AG04450 (cell line): ENCODE measurements at regions of chr1 and their contacts with region 1.

Region 1: GRCh38 chr1:23403735-23404486 is 20.6 kb downstream of the TCEA3 start:
- DNase-seq: peak; percentile 65
- H3K4me3 ChIP-seq: no peak overlapping the region
- H3K27ac ChIP-seq: peak overlapping the region; percentile 78
- H3K27me3 ChIP-seq: no peaks in the 10 kb centered on the region
- CTCF ChIP-seq: peak; percentile 96

Region 2: DNA sequence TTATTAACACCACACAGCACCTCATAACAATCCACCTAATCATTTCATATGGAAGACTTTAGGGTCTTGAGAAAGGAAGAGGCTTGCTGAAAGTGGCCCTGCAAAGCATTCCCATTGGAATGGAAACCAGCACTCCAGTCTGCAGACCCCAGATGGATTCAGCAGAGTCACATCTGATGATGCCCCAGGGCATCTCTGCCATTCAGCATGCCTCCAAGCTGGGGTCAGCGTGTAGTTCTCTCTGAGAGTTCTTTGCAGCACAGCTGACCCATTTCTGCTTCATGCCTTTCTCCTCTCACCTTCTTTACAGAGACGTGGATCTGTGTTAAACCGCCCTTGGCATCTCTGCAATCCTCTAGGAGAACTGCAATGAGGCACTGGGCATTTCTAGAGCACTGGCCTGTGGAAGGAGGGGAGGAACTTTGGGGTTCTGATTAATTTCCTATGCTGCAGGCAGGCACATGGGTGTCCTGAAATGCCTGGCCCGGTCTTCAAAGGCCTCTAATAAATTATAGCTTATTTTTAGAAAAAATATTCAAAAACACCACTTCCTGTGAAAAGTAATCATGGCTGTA is 232.6 kb before region 1 on chr1:
- CTCF ChIA-PET with region 1: no interaction called
- POLR2A ChIA-PET with region 1: no interaction called
- DNase-seq: no peak
- H3K4me3 ChIP-seq: no peak overlapping the region
- H3K27ac ChIP-seq: no peak overlapping the region
- H3K27me3 ChIP-seq: no peaks in the 10 kb centered on the region
- CTCF ChIP-seq: no peak

Region 3: DNA sequence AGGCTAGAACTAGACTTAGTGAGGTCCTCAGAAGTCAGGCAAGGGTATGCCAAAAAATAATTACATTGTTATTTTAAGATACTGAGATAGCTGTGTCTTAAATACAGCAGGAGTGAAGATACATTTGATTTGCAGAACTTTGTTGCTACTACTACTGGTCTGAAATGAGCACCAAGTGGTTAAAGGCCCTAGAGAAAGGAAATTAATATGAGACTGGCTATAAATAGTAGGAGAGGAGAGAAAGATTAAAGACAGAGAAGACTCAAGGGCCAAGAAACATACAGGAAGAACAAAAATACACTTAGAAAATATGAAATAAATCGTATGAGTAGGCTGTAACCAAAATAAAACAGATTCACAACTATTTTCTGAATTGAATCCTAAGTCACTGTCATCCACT is 81.1 kb before region 1 on chr1:
- CTCF ChIA-PET with region 1: interaction called, 11 read pairs
- POLR2A ChIA-PET with region 1: no interaction called
- DNase-seq: no peak
- H3K4me3 ChIP-seq: no peak overlapping the region
- H3K27ac ChIP-seq: no peak overlapping the region
- H3K27me3 ChIP-seq: no peaks in the 10 kb centered on the region
- CTCF ChIP-seq: no peak

Region 4: GRCh38 chr1:23367791-23368561 is 35.9 kb before region 1 on chr1:
- CTCF ChIA-PET with region 1: interaction called, 24 read pairs
- POLR2A ChIA-PET with region 1: interaction called, 5 read pairs
- DNase-seq: peak; percentile 97
- H3K4me3 ChIP-seq: peak overlapping the region; percentile 99
- H3K27ac ChIP-seq: peak overlapping the region; percentile 96
- H3K27me3 ChIP-seq: no peaks in the 10 kb centered on the region
- CTCF ChIP-seq: no peak

Region 5: GRCh38 chr1:23422241-23423030 is 18.5 kb after region 1 on chr1:
- CTCF ChIA-PET with region 1: interaction called, 25 read pairs
- POLR2A ChIA-PET with region 1: no interaction called
- DNase-seq: peak; percentile 43
- H3K4me3 ChIP-seq: peak overlapping the region; percentile 34
- H3K27ac ChIP-seq: peak overlapping the region; percentile 88
- H3K27me3 ChIP-seq: no peaks in the 10 kb centered on the region
- CTCF ChIP-seq: no peak